Dorsolateral prefrontal cortex (tissue), 120 donors: ENCODE measurements at regions of chr16 and their contacts with region 1.

Region 1: DNA sequence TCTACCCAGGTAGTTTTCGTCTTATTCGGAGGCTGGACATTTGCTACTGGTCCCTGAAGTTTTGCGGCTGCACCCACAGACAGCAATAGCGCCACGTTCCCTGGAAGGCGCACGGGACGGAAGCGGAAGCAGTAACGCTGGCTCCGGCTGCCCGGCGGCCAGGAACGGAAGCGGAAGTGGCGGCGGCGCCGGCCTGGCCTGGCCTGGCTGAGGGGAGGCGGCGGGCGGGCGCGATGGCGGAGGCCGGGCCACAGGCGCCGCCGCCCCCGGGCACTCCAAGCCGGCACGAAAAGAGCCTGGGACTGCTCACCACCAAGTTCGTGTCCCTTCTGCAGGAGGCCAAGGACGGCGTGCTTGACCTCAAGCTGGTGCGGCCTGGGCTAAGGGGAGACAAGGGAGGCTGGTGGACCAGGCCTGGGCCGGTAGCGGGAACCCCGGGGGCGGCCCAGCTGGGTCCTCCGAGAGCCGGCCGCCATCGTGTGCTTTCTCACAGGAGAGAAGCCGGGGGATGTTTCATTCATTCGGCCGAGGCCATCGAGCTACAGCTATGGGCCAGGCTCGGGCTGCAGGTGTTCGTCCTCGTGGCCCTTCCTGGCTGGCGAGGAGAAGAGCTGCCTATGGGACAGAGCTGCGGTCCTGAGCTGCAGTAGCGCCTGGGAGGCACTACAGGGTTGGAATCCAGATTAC is at the start of gene E2F4:
- DNase-seq: peak; percentile 88 to 97 (median 93)
- H3K4me3 ChIP-seq: peak within 1 kb of the TSS; percentile 71 to 100 (median 96)
- H3K27ac ChIP-seq: peak within 1 kb of the TSS in 52 of 59 donors; percentile 20 to 91 (median 76)
- H3K27me3 ChIP-seq: no peaks in the 10 kb centered on the region
- CTCF ChIP-seq: peak in 45 of 56 donors; percentile 11 to 63 (median 36)
- total RNA-seq, gene E2F4: 30.4 to 60.3 (median 41.7) TPM

Region 2: GRCh38 chr16:67129422-67129821 is 62.7 kb before region 1 on chr16:
- intact Hi-C with region 1: no loop called
- DNase-seq: peak in 2 of 10 donors; percentile 46 to 47
- H3K4me3 ChIP-seq: no peak overlapping the region
- H3K27ac ChIP-seq: peak overlapping the region; percentile 25 to 96 (median 89)
- H3K27me3 ChIP-seq: no peaks in the 10 kb centered on the region
- CTCF ChIP-seq: peak in 1 of 56 donors; percentile 17

Region 3: GRCh38 chr16:67226804-67227557 is 34.8 kb after region 1 on chr16 and contains the start of gene TMEM208:
- intact Hi-C with region 1: loop called (anchors 1 to 2 kb)
- DNase-seq: peak; percentile 94 to 98 (median 97)
- H3K4me3 ChIP-seq: peak within 1 kb of the TSS; percentile 61 to 100 (median 97)
- H3K27ac ChIP-seq: peak within 1 kb of the TSS in 54 of 59 donors; percentile 17 to 94 (median 78)
- H3K27me3 ChIP-seq: no peaks in the 10 kb centered on the region
- CTCF ChIP-seq: peak in 49 of 56 donors; percentile 3 to 63 (median 43)
- total RNA-seq, gene TMEM208: 16.2 to 40.3 (median 28.1) TPM